A549 (cell line): ENCODE measurements at regions of chr14 and their contacts with region 1.

Region 1: DNA sequence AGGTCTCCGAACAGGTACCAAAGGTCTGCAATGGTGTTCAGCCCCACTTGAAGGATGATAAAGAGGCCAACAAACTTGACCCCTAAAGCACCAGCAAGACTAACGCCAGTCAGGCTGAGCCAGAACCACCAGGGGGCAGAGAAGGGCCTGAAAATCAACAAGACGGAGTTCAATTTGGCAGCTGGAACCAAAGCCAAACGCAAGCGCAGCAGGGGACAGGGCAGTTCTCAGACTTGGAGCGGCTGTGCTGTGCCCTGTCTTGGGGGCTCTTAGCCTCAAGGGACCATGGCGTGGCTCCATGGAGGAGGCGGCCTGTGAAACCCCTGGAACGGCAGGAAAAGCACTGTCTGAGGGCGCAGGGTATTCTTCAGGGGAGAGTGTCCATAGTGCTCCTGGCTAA is 19.6 kb downstream of the POMT2 start:
- DNase-seq: peak; percentile 78 to 89
- ATAC-seq: peak; percentile 60 to 79
- H3K4me3 ChIP-seq: no peak overlapping the region
- H3K27ac ChIP-seq: peak overlapping the region; percentile 95 to 96
- H3K4me1 ChIP-seq: peaks cover 51% of the 10 kb centered on the region
- CTCF ChIP-seq: peak; percentile 95
- EP300 ChIP-seq: no peak
- POLR2A ChIP-seq: no peak
- RAD21 ChIP-seq: peak; percentile 96 to 97

Region 2: DNA sequence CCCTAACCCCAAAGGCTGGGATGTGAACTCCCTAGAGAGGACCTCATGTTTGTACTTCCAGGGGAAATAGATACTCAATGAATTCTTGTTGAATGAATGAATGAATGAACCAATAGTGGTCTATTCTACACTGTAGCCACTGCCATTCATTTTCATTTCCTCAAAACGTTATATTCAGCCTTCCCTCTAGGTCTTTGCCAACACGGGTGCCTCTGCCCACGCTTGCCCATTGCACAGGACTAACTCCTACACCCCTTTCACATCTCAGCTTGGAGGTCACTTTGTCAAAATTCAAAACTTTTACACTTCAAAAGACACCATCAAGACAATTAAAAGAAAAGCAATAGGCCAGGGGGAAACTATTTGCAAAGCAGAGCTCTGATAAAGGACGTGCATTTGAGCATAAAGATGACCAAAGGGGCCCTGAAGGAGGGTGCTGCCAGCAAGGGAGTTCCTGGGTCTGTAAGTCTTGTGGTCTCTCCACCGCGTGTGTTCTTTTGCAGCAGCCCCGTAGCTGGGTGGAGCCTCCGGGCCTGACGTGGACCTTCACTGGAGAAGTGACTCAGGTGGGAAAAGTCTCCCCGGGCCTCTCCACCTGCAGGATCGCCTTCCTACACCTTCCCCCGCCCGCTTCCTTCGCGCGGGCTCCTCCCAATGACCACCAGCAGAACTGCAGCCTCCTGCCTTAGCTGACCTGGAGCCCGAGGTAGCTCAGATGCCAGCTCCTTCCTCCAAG is 88.0 kb before region 1 on chr14:
- CTCF ChIA-PET with region 1: interaction called, 17 read pairs
- POLR2A ChIA-PET with region 1: no interaction called
- DNase-seq: peak; percentile 45 to 72
- ATAC-seq: peak; percentile 88 to 96
- H3K4me3 ChIP-seq: no peak overlapping the region
- H3K27ac ChIP-seq: no peak overlapping the region
- H3K4me1 ChIP-seq: no peaks in the 10 kb centered on the region
- CTCF ChIP-seq: peak; percentile 47
- EP300 ChIP-seq: no peak
- POLR2A ChIP-seq: no peak
- RAD21 ChIP-seq: peak; percentile 58 to 68

Region 3: DNA sequence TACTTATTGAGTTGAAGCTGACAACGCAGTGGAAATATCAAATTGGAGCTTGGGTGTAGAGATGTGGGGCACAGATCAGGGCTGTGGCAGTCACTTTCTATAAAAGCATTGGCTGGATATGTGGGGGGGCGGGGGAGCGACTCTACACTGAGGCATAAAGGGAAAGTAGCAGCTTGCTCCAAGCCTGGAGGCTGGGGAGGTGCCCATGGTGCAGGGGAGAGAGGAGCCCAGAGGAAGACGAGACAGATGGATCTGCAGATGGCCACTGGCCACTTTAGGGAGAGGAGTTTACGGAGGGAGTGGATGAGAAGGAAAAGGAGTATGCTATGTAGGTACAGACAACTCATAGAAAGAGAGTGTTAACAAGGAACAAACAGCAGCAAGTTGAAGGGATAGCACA is 16.6 kb before region 1 on chr14:
- CTCF ChIA-PET with region 1: interaction called, 53 read pairs
- POLR2A ChIA-PET with region 1: no interaction called
- DNase-seq: no peak
- ATAC-seq: no peak
- H3K4me3 ChIP-seq: no peak overlapping the region
- H3K27ac ChIP-seq: no peak overlapping the region
- H3K4me1 ChIP-seq: no peaks in the 10 kb centered on the region
- CTCF ChIP-seq: no peak
- EP300 ChIP-seq: no peak
- POLR2A ChIP-seq: no peak
- RAD21 ChIP-seq: no peak

Region 4: DNA sequence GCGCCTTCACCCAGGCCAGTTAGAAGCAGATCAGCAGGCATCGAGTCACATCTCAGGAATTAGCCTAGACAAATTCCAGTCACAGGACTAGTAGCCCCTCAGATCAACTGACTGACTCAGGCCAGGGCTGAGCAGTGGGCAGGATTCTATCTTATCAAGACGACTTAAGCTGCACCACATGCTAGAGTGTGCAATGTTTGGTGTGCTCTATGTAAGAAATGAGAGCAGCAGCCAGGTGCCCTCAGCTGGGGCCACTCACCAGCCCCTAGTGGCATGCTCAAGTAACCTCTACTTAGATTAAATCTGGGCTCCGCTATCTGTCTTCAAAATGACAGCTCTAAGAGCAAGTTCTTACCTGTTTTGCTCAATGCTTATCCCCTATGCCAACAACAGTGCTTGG is 10.4 kb before region 1 on chr14:
- CTCF ChIA-PET with region 1: interaction called, 53 read pairs
- POLR2A ChIA-PET with region 1: no interaction called
- DNase-seq: no peak
- ATAC-seq: peak; percentile 70 to 79; a peak in 4 of 6 replicates
- H3K4me3 ChIP-seq: no peak overlapping the region
- H3K27ac ChIP-seq: no peak overlapping the region
- H3K4me1 ChIP-seq: no peaks in the 10 kb centered on the region
- CTCF ChIP-seq: no peak
- EP300 ChIP-seq: no peak
- POLR2A ChIP-seq: no peak
- RAD21 ChIP-seq: no peak

Region 5: DNA sequence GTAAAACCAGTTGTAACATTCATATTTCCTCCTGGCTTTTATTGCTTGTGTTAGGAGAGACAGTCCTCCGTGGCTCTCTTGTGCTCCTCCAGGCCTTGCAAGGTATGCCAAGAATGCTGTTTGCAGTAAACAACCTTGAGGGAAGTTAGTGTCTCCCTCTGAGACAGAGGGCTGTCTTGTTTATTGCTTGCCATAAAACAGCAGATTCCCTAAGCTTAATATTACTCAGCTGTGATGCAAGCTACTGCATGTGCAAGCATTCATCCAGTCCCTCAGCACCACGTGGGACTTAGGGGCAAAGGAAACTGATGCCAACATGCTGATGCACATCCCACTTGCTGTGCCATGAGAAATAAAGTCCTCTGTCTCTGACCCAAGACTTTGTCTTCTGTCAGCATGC is 12.9 kb after region 1 on chr14:
- CTCF ChIA-PET with region 1: interaction called, 622 read pairs
- POLR2A ChIA-PET with region 1: interaction called, 12 read pairs
- DNase-seq: peak in 1 of 2 experiments; percentile 84
- ATAC-seq: peak; percentile 82 to 85
- H3K4me3 ChIP-seq: no peak overlapping the region
- H3K27ac ChIP-seq: peak overlapping the region; percentile 73 to 76
- H3K4me1 ChIP-seq: peaks cover 56% of the 10 kb centered on the region
- CTCF ChIP-seq: no peak
- EP300 ChIP-seq: no peak; a peak in 1 of 5 replicates
- POLR2A ChIP-seq: no peak
- RAD21 ChIP-seq: no peak

Region 6: GRCh38 chr14:77320238-77320935 is 19.3 kb after region 1 on chr14 and contains the start of gene POMT2:
- CTCF ChIA-PET with region 1: interaction called, 622 read pairs
- POLR2A ChIA-PET with region 1: interaction called, 45 read pairs
- DNase-seq: peak; percentile 91 to 93
- ATAC-seq: peak; percentile 81 to 83
- H3K4me3 ChIP-seq: peak within 1 kb of the TSS; percentile 99
- H3K27ac ChIP-seq: peak within 1 kb of the TSS; percentile 99
- H3K4me1 ChIP-seq: peaks cover 34% of the 10 kb centered on the region
- CTCF ChIP-seq: peak; percentile 30; the same call in 2 of the 3 replicates
- EP300 ChIP-seq: no peak
- POLR2A ChIP-seq: peak; percentile 68
- RAD21 ChIP-seq: no peak
- polyA plus RNA-seq, gene POMT2: 35.0 and 38.7 TPM in 2 replicates

Region 7: GRCh38 chr14:77554207-77554606 is 253.1 kb after region 1 on chr14:
- CTCF ChIA-PET with region 1: interaction called, 14 read pairs
- POLR2A ChIA-PET with region 1: no interaction called
- DNase-seq: no peak
- ATAC-seq: no peak
- H3K4me3 ChIP-seq: no peak overlapping the region
- H3K27ac ChIP-seq: no peak overlapping the region
- H3K4me1 ChIP-seq: no peaks in the 10 kb centered on the region
- CTCF ChIP-seq: no peak
- EP300 ChIP-seq: no peak
- POLR2A ChIP-seq: no peak
- RAD21 ChIP-seq: no peak